Activated B cell treated with CpG ODN at 0.5 μM for 24 hours (primary cell): ENCODE measurements at regions of chr19 and their contacts with region 1.

Region 1: GRCh38 chr19:38374429-38375176 is at the start of gene PSMD8:
- DNase-seq: peak; percentile 96
- ATAC-seq: peak; percentile 96
- H3K4me3 Mint-ChIP-seq: peak within 1 kb of the TSS; percentile 100
- H3K27ac Mint-ChIP-seq: peak within 1 kb of the TSS; percentile 96
- H3K4me1 Mint-ChIP-seq: peaks cover 25% of the 10 kb centered on the region
- H3K27me3 Mint-ChIP-seq: no peaks in the 10 kb centered on the region
- CTCF ChIP-seq: no peak
- total RNA-seq, gene PSMD8: 134 and 138 TPM in 2 replicates

Region 2: GRCh38 chr19:38245826-38246498 is 128.6 kb before region 1 on chr19:
- CTCF ChIA-PET with region 1: interaction called, 7 read pairs
- POLR2A ChIA-PET with region 1: interaction called, 5 read pairs
- intact Hi-C with region 1: loop called (anchors 1 kb)
- DNase-seq: no peak
- ATAC-seq: no peak
- H3K4me3 Mint-ChIP-seq: no peak overlapping the region
- H3K27ac Mint-ChIP-seq: peak overlapping the region; percentile 56
- H3K4me1 Mint-ChIP-seq: peaks cover 29% of the 10 kb centered on the region
- H3K27me3 Mint-ChIP-seq: no peaks in the 10 kb centered on the region
- CTCF ChIP-seq: no peak

Region 3: GRCh38 chr19:38315657-38316476 is 58.7 kb before region 1 on chr19 and contains the start of gene YIF1B:
- CTCF ChIA-PET with region 1: no interaction called
- POLR2A ChIA-PET with region 1: interaction called, 5 read pairs
- intact Hi-C with region 1: loop called (anchors 1 kb)
- DNase-seq: peak; percentile 89
- ATAC-seq: peak; percentile 92
- H3K4me3 Mint-ChIP-seq: peak within 1 kb of the TSS; percentile 85
- H3K27ac Mint-ChIP-seq: peak within 1 kb of the TSS; percentile 94
- H3K4me1 Mint-ChIP-seq: peaks cover 49% of the 10 kb centered on the region
- H3K27me3 Mint-ChIP-seq: no peaks in the 10 kb centered on the region
- CTCF ChIP-seq: no peak
- total RNA-seq, gene YIF1B: 28.7 and 30.1 TPM in 2 replicates

Region 4: DNA sequence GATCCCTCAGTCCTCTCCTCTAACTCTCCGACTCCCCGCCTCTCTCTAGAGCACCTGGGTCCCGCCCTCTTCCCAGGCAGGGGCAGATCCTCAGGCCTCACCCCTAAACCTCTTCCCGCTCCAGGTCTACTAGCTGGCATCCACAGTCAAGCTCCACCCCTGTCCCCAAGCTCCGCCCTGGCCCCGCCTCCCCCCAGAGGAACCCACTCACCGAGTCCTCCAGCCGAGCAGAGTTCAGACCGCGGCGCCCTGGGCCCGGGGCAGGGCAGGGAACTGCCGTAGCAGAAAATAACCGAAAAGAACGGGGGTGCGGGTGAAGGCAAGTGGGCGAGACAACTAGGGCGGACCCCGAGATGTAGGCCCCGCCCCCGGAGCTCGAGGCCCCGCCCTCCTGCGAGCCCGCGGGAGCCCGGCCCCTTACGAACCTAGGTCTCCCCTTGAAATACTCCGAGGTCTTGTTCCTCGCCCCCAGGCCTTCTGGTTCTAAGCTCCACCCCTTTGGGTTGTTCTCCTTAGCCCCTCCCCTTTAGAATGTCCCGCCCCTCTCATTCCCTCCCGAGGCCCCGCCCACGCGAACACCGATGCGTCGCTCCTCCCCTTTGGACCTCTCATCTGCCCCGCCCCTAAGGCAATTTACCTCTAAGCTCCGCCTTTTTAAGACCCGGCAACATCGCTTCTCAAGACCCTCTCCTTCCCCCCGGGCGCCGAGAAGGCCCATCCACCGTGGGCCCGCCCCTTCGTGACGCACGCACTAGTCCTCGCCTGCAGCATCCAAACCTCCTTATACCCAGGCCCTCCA is 13.1 kb after region 1 on chr19 and contains the start of gene GGN:
- CTCF ChIA-PET with region 1: interaction called, 8 read pairs
- POLR2A ChIA-PET with region 1: interaction called, 78 read pairs
- intact Hi-C with region 1: loop called (anchors 1 kb)
- DNase-seq: peak; percentile 73
- ATAC-seq: peak; percentile 72
- H3K4me3 Mint-ChIP-seq: peak within 1 kb of the TSS; percentile 87
- H3K27ac Mint-ChIP-seq: peak within 1 kb of the TSS; percentile 42
- H3K4me1 Mint-ChIP-seq: peaks cover 25% of the 10 kb centered on the region
- H3K27me3 Mint-ChIP-seq: peaks cover 27% of the 10 kb centered on the region
- CTCF ChIP-seq: no peak
- total RNA-seq, gene GGN: 0.22 and 1.2 TPM in 2 replicates

Region 5: DNA sequence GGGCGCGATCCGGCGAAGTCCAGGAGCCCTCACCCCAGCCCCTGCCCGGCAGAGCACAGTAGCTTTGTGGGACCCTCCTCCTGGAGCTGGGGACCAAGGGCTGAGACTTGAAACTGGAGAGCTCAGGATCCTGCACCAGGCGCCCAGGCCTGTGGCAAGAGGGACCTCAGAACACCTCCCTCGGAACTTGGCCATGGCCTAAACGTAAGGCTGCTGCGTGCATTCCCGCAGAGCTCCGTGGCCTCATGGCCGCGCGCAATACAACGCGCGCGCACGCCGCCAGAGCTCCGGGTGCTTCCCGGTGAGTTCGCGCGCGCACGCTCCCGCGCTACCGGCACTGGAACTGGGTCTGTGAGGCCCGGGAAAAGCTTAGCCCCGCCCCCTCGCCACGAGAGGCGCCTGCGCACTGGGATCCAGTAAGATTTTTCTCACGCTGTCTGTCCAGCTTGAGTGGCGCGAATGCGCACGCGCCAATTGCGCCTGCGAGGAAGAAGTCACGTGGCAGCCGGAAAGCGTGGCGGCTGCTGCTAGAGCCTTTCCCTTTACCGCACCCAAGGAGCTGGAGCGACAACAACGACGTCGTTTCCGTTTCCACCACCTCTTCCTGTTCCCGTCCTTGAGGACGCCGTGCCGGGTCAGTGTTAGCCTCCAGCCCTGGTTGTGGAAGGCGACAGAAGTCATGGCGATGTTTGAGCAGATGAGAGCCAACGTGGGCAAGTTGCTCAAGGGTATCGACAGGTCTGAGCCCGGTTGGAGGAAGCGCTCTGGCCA is 244.2 kb after region 1 on chr19 and contains the start of gene EIF3K:
- CTCF ChIA-PET with region 1: no interaction called
- POLR2A ChIA-PET with region 1: interaction called, 21 read pairs
- intact Hi-C with region 1: loop called (anchors 1 kb)
- DNase-seq: peak; percentile 97
- ATAC-seq: peak; percentile 28
- H3K4me3 Mint-ChIP-seq: peak within 1 kb of the TSS; percentile 100
- H3K27ac Mint-ChIP-seq: peak within 1 kb of the TSS; percentile 97
- H3K4me1 Mint-ChIP-seq: peaks cover 53% of the 10 kb centered on the region
- H3K27me3 Mint-ChIP-seq: no peaks in the 10 kb centered on the region
- CTCF ChIP-seq: no peak
- total RNA-seq, gene EIF3K: 344 and 385 TPM in 2 replicates

Region 6: GRCh38 chr19:38899447-38900219 is 525.0 kb after region 1 on chr19 and contains the starts of genes NFKBIB and SIRT2:
- CTCF ChIA-PET with region 1: no interaction called
- POLR2A ChIA-PET with region 1: interaction called, 4 read pairs
- intact Hi-C with region 1: loop called (anchors 1 kb)
- DNase-seq: peak; percentile 91
- ATAC-seq: peak; percentile 91
- H3K4me3 Mint-ChIP-seq: peak within 1 kb of the TSS; percentile 91
- H3K27ac Mint-ChIP-seq: peak within 1 kb of the TSS; percentile 87
- H3K4me1 Mint-ChIP-seq: peaks cover 41% of the 10 kb centered on the region
- H3K27me3 Mint-ChIP-seq: no peaks in the 10 kb centered on the region
- CTCF ChIP-seq: no peak
- total RNA-seq, gene NFKBIB: 45.5 and 49.5 TPM in 2 replicates
- total RNA-seq, gene SIRT2: 28.4 and 32.7 TPM in 2 replicates

Region 7: DNA sequence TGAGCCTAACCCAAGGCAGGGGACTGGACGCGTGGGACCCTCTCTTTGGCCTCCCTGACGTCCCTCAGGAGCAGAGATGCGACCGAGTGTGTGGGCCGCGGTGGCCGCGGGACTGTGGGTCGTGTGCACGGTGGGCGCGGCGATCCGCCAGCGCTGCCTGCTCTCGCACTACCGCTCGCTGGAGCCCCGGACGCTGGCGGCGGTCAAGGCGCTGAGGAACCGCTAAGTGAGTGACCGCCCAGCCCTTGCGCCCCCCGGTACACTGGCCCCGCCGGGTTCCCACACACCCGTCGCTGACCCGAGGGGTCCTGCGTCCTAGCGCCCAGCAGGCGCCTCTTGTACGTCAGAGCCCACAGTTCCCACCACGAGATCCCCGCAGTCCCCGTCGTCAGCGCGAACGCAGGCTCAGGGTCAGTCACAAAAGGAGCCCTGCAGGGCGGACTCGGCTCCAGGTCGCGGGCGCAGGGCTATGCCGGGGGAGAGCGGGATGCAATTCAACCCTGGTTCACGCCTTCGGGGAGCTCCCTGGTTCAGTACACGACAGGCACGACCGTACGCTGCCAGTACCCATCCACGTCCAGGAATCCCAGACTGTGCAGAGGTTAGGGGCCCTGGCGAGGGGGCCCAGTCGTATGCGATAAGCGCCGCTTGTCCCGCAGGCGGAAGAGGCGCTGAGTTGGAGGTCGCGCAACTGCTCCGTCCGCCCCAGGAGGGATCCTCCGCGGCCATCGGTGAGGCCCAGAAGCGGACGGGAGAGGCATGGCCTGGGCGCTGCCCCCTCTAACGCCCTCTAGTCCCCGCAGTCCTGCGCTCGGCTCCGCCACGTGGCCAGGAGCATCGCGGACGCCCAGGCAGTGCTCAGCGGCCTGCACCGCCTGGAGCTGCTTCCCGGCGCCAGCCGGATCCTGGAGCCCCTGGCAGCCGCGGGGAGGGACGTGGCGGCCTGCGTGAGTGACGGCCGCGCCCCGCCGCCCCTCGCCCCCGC is 890.0 kb after region 1 on chr19:
- CTCF ChIA-PET with region 1: no interaction called
- POLR2A ChIA-PET with region 1: no interaction called
- intact Hi-C with region 1: no loop called
- DNase-seq: no peak
- ATAC-seq: no peak
- H3K4me3 Mint-ChIP-seq: no peak overlapping the region
- H3K27ac Mint-ChIP-seq: no peak overlapping the region
- H3K4me1 Mint-ChIP-seq: no peaks in the 10 kb centered on the region
- H3K27me3 Mint-ChIP-seq: peaks cover 35% of the 10 kb centered on the region
- CTCF ChIP-seq: no peak